Breast epithelium (tissue), 4 donors: ENCODE measurements at regions of chr13 and their contacts with region 1.

Region 1: DNA sequence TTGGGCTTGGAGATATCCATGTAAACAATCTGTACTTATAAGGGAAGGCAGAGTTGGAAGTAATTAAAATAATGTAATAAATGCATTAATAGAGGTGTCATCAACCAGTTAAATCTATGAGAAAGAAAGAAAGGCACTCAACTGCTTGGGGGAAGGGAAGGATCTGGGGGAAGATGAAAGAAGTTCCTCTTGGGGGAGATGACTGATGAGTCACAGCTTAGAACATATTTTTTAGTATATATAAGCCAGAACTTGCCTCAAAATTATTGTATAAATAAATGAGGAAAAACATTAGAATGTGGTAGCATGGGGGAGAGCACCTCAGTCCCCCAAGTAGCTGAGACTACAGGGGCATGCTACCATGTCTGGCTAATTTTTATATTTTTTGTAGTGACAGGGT is 205.8 kb downstream of the GGACT start:
- DNase-seq: no peak
- H3K4me3 ChIP-seq: no peak overlapping the region
- H3K27ac ChIP-seq: no peak overlapping the region
- H3K4me1 ChIP-seq: no peaks in the 10 kb centered on the region
- H3K27me3 ChIP-seq: no peaks in the 10 kb centered on the region
- CTCF ChIP-seq: no peak
- POLR2A ChIP-seq: no peak

Region 2: DNA sequence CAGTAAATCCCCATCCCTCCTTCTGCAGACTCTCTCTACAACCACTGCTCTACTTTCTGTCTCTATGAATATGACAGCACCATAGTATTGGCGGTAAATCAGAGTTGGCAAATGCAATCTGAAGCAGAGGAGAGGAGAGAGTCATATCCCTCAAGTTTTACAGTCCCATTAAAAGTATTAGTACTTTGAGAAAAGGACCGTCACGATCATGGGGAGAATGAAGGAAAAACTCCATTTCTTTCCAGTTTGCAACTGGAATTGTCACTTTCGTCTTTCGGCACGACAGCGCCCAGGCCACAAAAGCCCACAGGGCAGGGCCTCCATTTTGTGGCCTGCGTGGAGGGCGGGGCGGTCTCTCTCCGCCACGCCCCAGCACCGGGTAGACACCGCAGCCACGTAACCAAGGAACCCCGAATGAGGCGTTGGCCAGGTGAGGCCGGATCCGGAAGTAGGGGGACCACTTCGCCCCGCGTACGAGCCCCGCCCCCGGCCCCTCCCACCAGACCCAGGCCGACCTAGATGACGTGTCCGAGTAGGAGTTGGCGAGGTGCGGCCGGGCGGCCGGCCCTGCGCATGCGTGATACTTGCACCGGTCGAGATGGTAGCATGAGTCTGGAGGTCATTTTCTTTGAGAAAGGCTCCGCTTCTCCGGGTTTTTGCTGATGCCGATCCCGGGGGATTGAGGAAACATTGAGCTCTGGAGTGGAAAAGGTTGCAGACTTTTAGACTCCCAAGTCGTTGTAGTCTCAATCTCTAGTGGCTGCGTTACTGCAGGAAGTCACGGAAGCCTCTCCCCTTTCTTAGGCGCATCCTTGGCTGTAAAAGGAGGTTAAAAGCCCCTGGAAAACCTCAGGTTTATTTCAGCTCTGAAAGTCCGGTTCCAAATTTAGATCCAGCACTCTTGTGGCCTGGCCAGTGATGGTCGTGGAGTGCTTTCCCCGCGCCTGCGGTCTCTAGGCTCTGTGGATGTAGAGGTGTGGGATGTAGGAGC is 884.3 kb before region 1 on chr13:
- intact Hi-C with region 1: no loop called
- DNase-seq: peak; percentile 98
- H3K4me3 ChIP-seq: peak overlapping the region; percentile 51 to 67 (median 54)
- H3K27ac ChIP-seq: peak overlapping the region; percentile 86 to 89
- H3K4me1 ChIP-seq: peaks cover 0 to 18% of the 10 kb centered on the region in 2 donors
- H3K27me3 ChIP-seq: no peaks in the 10 kb centered on the region
- CTCF ChIP-seq: no peak
- POLR2A ChIP-seq: no peak

Region 3: DNA sequence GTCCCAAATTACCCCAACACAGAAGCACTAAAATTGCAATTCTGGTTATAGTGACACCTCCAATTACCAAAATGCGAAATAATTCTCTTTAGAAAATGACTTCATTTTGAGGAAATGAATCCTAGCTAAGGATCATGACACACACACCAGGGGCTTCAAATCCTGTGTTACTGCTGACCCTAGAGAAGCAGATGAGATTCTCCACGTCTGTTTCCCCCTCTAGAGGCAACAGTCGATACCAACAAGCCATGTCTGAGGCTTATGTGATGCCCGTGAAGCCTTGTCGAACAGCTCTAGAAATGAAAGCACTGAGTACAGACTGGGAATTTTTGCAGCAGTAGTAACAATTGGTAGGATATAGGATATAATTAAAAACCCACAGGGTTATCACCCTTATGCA is 445.4 kb after region 1 on chr13:
- intact Hi-C with region 1: loop called (anchors 10 kb)
- DNase-seq: no peak
- H3K4me3 ChIP-seq: no peak overlapping the region
- H3K27ac ChIP-seq: no peak overlapping the region
- H3K4me1 ChIP-seq: no peaks in the 10 kb centered on the region
- H3K27me3 ChIP-seq: no peaks in the 10 kb centered on the region
- CTCF ChIP-seq: no peak
- POLR2A ChIP-seq: no peak